ENCODE measurements at regions of chr4 and their contacts with region 1.

Region 1: GRCh38 chr4:140153718-140154571 is at the start of gene MAML3:
- DNase-seq: peak; percentile 82 to 97 (median 92)

Region 2: DNA sequence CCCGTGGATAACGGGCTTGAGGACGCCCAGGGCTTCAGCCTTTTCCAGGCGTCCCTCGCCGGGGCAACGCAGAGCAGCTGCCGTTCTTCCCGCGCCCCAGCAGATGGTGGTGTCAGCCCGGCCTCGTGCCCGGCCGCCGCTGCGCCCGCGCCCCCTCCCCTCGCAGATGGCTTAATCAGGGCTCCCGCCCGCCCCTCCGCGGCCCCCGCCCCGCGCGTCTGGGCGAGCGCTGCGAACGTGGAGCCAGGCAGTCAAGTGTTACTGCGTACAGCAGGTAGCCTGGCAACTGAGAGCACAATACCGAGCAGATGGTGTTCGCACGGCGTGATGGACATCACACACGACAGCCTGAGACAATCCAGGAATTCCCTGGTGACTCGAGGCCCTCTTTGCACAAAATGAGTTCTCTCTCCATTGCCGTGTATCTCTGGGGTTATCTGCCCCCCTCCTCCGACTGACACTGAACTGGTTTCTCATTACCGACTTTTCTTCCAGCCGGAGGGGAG is 419.0 kb before region 1 on chr4:
- intact Hi-C with region 1: loop called (anchors 5 kb)
- DNase-seq: peak; percentile 68 to 96 (median 91)

Region 3: DNA sequence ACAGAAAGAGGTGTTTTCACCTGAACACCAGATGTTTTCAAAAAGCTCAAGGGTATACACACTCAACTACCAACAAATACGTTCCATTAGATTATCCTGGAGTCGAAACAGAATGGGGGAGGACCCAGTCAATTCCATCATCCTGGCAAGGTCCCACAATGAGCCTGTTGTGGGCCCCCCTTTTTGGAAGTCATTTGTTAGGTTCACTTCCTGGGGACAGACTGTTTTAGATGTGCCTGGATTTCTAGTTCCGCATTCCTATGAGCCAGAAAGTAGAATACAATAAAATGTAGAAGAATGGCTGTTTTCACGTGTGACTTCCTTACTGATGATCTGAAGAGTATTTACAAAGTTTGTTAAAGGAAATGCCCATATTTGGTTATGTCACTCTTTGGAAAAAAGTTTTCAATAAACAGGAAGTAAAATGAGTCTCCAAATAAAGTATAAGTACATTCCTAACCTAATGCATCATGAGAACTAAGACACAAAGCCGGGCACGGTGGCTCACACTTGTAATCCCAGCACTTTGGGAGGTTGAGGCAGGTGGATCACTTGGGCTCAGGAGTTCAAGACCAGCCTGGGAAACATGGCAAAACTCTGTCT is 192.5 kb before region 1 on chr4:
- intact Hi-C with region 1: no loop called
- DNase-seq: no peak

Region 4: GRCh38 chr4:140049024-140049848 is 104.7 kb before region 1 on chr4:
- intact Hi-C with region 1: loop called (anchors 5 kb)
- DNase-seq: peak; percentile 21 to 86 (median 59)

Region 5: GRCh38 chr4:140109737-140110136 is 44.2 kb before region 1 on chr4:
- intact Hi-C with region 1: loop called (anchors 5 kb)
- DNase-seq: no peak

Region 6: GRCh38 chr4:140343303-140343702 is 189.4 kb after region 1 on chr4:
- intact Hi-C with region 1: loop called (anchors 10 kb)
- DNase-seq: no peak